ENCODE measurements at regions of chr4 and their contacts with region 1.

Region 1: DNA sequence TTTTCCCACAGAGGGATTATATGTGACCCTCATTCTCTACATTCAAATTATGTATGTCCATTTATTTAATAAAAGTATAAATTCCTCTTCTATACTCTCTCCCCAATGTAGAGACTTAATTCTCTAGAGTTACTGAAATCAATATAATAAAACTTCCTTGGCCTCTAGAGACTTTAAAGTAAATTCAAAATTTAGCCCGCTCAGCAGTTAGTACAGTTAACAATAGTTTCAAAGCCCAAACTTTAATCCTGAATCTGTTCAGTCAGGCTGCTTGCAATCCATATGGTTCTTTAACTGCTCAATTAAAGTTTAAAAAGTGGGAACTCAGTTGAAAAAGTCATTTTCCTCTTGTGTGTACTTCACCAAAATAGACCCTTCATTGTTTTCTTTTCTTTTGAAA is 2558.4 kb downstream of the ARAP2 start:
- DNase-seq: no peak
- H3K4me3 ChIP-seq: no peak overlapping the region
- H3K27ac ChIP-seq: no peak overlapping the region
- H3K4me1 ChIP-seq: no peaks in the 10 kb centered on the region
- H3K27me3 ChIP-seq: no peaks in the 10 kb centered on the region
- CTCF ChIP-seq: no peak
- EP300 ChIP-seq: no peak
- POLR2A ChIP-seq: no peak

Region 2: DNA sequence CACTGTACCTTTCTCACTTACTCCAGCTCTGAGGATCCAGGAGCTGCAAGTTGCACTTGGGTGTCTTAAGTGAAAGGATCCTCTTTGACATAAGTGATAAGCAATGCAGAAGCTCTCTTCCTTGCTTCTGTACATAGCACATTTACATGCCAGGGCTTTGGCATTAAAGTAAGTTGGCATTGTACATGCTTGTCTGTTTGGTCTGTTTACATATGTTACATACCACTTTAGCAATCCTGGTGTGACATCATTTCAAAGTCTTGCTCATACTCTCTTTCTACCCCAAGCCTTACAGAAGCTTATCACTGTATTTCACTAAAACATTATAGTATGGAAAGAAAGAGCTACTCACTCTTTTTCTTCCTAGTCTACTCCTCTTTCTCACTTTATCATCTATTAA is 10.1 kb after region 1 on chr4:
- intact Hi-C with region 1: loop called (anchors 1 kb)
- DNase-seq: no peak
- H3K4me3 ChIP-seq: no peak overlapping the region
- H3K27ac ChIP-seq: no peak overlapping the region
- H3K4me1 ChIP-seq: peaks cover 0 to 5% (median 0%) of the 10 kb centered on the region in 4 donors
- H3K27me3 ChIP-seq: no peaks in the 10 kb centered on the region
- CTCF ChIP-seq: no peak
- EP300 ChIP-seq: no peak
- POLR2A ChIP-seq: no peak

Measured in sigmoid colon (tissue), 7 donors.